ENCODE measurements at regions of chr2 and their contacts with region 1.

Region 1: DNA sequence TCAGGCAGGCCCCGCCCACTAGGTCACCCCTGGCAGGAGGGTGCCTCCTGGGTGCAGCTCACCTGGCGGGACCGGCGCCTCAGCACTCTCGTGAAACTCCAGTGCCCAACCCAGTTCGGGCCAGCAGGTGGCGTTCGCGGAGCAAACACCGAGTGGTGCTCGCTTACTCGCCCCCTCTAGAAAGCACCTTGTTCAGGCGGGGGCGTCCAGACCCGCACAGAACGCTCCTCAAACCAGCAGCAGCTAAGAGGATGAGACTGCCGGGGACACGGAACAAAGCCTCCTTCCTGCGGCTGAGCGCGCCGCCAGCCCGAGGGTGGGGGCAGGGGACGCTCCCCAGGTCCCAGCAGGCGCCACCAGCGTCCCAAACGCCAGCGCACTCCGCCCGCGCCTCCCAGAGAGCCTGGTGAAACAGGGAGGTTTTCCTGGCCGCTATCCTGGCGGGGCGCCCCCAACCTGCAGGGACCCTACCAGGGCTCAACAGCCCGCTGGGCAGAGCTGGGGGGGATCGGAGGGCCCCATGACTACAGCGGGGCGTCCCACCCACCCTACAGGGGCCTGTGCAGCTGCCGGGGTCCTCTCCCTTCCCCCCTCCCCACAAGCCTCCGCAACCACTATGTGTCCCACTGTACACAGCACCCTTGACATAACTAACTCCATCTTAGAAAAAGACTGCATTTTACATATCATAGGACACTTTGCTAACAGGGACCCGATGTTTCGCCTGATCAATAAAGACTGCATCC is 44.7 kb downstream of the MRPS5 start:
- DNase-seq: peak; percentile 95
- H3K4me3 Mint-ChIP-seq: peak overlapping the region; percentile 72
- H3K27ac Mint-ChIP-seq: peak overlapping the region; percentile 92
- H3K4me1 Mint-ChIP-seq: peaks cover 62% of the 10 kb centered on the region
- H3K27me3 Mint-ChIP-seq: peaks cover 1% of the 10 kb centered on the region

Region 2: GRCh38 chr2:94986392-94986963 is 90.5 kb before region 1 on chr2:
- CTCF ChIA-PET with region 1: interaction called, 23 read pairs
- POLR2A ChIA-PET with region 1: no interaction called
- intact Hi-C with region 1: no loop called
- DNase-seq: peak; percentile 57
- H3K4me3 Mint-ChIP-seq: no peak overlapping the region
- H3K27ac Mint-ChIP-seq: no peak overlapping the region
- H3K4me1 Mint-ChIP-seq: no peaks in the 10 kb centered on the region
- H3K27me3 Mint-ChIP-seq: peaks cover 12% of the 10 kb centered on the region

Region 3: DNA sequence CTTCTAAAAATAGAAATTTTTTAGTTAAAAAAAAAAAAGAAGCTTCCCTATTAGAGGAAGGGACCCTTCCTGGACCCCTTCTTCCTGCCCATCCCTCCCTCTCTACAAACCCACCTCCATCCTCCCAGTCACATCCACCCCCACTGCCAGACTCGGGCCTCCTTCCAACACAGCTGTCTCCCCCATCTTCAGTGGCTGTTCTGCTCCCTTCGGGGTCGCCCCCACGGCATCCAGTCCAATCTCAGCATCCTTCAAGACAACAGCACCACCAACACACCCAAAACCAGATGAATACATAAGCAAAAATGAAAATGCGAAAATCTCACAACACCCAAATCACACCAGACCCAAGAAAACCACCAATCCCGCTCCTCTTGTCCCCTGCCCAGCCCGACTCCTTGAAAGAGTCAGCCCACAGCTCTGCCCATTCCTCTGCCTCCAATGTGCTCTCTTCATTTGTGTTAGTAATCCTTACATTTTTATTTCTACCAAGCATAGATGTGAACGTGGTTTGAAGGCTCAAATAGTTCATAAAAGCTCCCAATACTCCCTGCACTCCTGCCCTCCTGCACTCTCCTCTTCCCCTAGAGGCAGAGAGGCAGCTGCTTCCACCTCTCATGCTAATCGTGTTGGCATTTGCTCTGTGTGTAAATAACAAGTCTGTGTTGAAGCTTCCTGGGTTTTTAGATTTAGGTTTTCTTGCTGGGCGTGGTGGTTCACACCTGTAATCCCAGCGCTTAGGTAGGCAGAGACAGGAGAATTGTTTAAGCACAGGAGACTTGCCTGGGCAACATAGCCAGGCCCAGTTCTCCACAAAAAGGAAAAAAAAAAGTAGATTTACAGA is 14.5 kb before region 1 on chr2:
- CTCF ChIA-PET with region 1: interaction called, 156 read pairs
- POLR2A ChIA-PET with region 1: interaction called, 3 read pairs
- intact Hi-C with region 1: loop called (anchors 1 kb)
- DNase-seq: no peak
- H3K4me3 Mint-ChIP-seq: no peak overlapping the region
- H3K27ac Mint-ChIP-seq: peak overlapping the region; percentile 71
- H3K4me1 Mint-ChIP-seq: peaks cover 29% of the 10 kb centered on the region
- H3K27me3 Mint-ChIP-seq: no peaks in the 10 kb centered on the region

Region 4: GRCh38 chr2:95115418-95115817 is 38.5 kb after region 1 on chr2:
- CTCF ChIA-PET with region 1: interaction called, 95 read pairs
- POLR2A ChIA-PET with region 1: interaction called, 4 read pairs
- intact Hi-C with region 1: loop called (anchors 1 kb)
- DNase-seq: peak; percentile 83
- H3K4me3 Mint-ChIP-seq: no peak overlapping the region
- H3K27ac Mint-ChIP-seq: peak overlapping the region; percentile 38
- H3K4me1 Mint-ChIP-seq: peaks cover 41% of the 10 kb centered on the region
- H3K27me3 Mint-ChIP-seq: no peaks in the 10 kb centered on the region

Region 5: GRCh38 chr2:95159690-95160449 is 82.9 kb after region 1 on chr2 and contains the start of gene ZNF514:
- CTCF ChIA-PET with region 1: interaction called, 4 read pairs
- POLR2A ChIA-PET with region 1: no interaction called
- intact Hi-C with region 1: loop called (anchors 1 kb)
- DNase-seq: peak; percentile 76
- H3K4me3 Mint-ChIP-seq: peak within 1 kb of the TSS; percentile 82
- H3K27ac Mint-ChIP-seq: peak within 1 kb of the TSS; percentile 62
- H3K4me1 Mint-ChIP-seq: peaks cover 20% of the 10 kb centered on the region
- H3K27me3 Mint-ChIP-seq: no peaks in the 10 kb centered on the region
- total RNA-seq, gene ZNF514: 10.8 to 11.6 TPM

Region 6: DNA sequence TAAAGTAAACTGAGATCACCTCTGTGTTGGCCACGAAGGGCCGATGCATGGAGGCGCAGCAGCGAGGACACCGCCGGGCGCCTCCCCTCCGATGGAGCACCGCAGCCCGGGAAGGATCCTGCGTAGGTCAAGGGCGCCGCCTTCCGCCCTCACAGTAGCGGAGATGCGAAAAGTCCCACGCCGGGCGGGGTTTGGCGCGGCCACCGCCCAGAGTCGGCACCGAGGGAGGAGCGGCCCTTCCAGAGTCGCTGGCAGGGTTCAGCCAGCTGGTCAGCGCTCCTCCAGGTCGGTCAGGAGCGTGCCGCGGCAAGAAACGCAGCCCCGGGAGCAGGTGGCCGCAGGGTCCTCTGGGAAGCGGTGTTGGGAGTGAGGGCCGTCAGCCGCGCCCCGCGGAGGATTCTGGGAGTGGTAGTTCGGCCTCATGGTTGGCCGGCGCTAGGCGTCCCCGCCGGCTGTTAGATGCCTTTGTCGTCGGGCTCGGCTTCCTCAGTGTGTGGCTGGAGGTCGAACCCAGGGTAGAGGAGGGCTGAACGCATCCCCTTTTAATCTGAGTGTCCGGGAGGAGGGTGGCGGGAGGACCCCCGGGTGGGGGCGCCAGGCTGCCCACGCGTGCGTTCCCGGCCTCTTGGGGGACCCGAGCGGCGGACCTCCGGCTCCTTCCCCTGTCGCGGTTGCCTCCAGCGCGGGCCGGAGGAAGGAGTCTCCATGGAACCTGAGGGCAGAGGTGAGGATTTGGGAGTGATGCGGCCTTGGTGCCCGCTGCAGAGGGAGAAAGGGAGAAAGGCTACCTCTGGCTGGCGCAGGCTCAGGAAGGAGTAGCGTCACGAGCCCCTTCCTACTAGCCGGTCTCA is 130.4 kb after region 1 on chr2 and contains the start of gene ZNF892:
- CTCF ChIA-PET with region 1: no interaction called
- POLR2A ChIA-PET with region 1: no interaction called
- intact Hi-C with region 1: loop called (anchors 2 kb)
- DNase-seq: peak; percentile 88
- H3K4me3 Mint-ChIP-seq: peak within 1 kb of the TSS; percentile 89
- H3K27ac Mint-ChIP-seq: peak within 1 kb of the TSS; percentile 30
- H3K4me1 Mint-ChIP-seq: peaks cover 15% of the 10 kb centered on the region
- H3K27me3 Mint-ChIP-seq: no peaks in the 10 kb centered on the region
- total RNA-seq, gene ZNF892: 2.7 to 3.3 TPM

Region 7: GRCh38 chr2:95379371-95379831 is 302.4 kb after region 1 on chr2:
- CTCF ChIA-PET with region 1: no interaction called
- POLR2A ChIA-PET with region 1: no interaction called
- intact Hi-C with region 1: no loop called
- DNase-seq: no peak
- H3K4me3 Mint-ChIP-seq: no peak overlapping the region
- H3K27ac Mint-ChIP-seq: no peak overlapping the region
- H3K4me1 Mint-ChIP-seq: no peaks in the 10 kb centered on the region
- H3K27me3 Mint-ChIP-seq: peaks cover 6% of the 10 kb centered on the region

Measured in activated CD4-positive, alpha-beta memory T cell treated with anti-CD3 and anti-CD28 coated beads for 36 hours (primary cell).